ENCODE measurements at regions of chr9 and their contacts with region 1.

Region 1: DNA sequence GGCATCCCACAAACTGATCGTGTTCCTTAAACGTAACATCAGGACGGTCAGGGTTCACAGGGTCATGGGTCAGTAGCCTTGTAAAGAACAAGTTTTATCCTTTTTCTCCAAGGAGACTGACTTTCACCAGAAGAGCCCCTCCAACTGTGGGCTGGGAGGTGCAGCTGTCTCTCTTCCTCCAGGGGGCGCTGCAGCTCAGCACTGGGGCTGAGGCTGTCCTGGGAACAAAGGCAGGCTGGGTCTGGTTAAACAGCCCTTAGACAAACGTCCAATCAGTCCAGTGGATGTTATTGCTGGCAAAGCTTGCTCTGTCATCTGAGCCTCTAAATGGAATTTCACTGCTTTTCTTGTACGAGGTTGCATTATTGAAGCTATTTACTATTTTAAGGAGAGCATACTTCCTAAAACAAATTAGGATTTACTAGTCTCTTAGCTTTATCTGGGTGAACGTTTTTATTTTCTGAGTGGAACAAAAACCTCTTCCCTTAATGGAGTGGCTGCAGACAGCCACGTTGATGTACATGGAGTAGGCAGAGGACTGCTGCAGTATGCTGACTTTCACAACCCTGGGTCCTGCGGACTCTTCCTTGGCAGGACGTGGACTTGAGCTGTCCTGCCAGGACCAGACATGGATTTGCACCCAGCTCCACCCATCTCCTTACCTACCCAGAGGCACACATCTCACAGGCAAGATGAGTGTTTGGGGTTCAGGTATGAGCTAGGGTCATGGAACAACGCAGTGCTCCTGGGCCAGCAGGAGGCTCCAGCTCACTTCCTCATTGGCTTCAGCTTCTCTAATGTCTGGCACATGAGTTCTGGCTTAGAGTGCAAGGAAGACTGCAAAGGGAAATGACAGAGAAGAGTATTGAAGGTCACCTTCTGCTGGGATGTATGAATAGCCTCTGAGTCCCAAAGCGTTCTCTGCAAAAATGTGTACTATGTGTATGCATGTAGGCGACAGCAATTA is 7.8 kb downstream of the EXOSC2 start:
- DNase-seq: peak; percentile 81
- H3K4me3 ChIP-seq: no peak overlapping the region
- H3K27ac ChIP-seq: no peak overlapping the region
- H3K27me3 ChIP-seq: no peaks in the 10 kb centered on the region
- CTCF ChIP-seq: peak; percentile 99

Region 2: DNA sequence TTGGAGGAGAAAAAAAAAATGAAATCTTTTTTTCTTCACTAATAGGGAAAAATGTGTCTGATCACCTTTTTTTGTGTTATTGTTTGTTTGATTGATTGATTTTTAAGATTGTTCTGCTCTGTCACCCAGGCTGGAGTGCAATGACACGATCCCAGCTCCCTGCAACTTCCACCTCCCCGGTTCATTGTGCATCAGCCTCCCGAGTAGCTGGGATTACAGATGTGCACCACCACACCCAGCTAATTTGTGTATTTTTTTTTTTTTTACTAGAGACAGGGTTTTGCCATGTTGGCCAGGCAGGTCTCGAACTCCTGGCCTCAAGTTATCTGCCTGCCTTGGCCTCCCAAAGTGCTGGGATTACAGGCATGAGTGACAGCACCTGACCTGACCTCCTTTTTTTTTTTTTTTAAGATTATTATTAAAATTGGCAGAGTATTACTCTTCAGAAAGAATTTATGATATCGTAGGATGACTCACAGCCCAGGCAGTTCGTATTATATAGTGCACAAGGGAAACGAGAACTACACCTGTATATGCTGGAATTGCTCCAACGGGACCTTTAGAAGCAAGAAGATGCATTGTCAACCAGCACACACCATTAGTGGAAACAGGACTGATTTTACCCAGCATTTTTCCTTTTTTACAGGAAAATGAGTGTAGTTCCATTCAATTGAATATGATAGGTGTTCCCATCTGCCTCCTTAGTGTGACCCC is 94.3 kb before region 1 on chr9:
- CTCF ChIA-PET with region 1: no interaction called
- POLR2A ChIA-PET with region 1: no interaction called
- DNase-seq: no peak
- H3K4me3 ChIP-seq: no peak overlapping the region
- H3K27ac ChIP-seq: no peak overlapping the region
- H3K27me3 ChIP-seq: no peaks in the 10 kb centered on the region
- CTCF ChIP-seq: no peak

Region 3: GRCh38 chr9:130682490-130683121 is 18.7 kb before region 1 on chr9:
- CTCF ChIA-PET with region 1: interaction called, 16 read pairs
- POLR2A ChIA-PET with region 1: no interaction called
- DNase-seq: no peak
- H3K4me3 ChIP-seq: peak overlapping the region; percentile 36
- H3K27ac ChIP-seq: no peak overlapping the region
- H3K27me3 ChIP-seq: peaks cover 19% of the 10 kb centered on the region
- CTCF ChIP-seq: peak; percentile 86

Region 4: DNA sequence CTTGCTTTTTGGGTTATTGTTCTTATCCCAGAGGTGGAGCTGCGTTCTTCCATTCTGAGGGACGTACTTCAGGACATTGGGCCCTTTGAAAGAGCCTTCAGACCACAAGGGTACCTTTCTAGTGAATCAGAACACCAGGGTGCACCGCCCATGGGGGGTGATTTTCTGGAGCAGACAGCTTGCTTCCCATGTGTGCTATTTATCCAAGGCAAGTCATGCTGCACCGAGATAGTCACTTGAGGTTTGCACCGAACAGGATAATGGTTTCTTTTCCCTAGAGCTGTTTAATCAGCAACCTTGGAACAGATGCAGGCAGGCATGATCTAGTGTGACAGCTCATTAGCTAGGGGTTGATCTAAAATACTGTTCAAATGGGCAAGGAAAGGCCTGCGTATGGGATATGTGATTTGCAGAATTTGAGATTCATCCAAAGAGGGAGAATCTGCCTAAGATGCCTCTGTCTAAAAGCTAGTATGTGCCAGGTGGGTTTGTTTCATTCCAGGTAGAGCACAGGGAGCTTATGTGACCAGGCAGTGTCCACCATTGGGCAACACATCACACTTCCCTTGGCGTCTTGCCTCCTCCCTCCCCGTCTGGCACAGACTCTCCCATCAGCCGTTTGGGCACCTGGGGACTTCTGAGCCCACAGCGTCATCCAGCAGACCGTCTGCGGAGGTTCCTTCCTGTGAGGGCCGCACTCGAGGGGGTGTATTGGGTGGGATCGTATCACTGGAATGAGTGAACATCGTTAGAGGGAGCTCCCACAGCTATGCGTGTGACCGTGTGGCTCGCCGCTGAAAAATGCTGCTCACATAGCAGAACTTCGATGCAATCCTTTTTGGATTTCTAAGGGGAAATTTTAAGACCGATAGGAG is 156.8 kb after region 1 on chr9:
- CTCF ChIA-PET with region 1: interaction called, 390 read pairs
- POLR2A ChIA-PET with region 1: no interaction called
- DNase-seq: peak; percentile 82
- H3K4me3 ChIP-seq: 0 out of 2 replicates have a peak overlapping the region, but pooled peaks have one; percentile 7
- H3K27ac ChIP-seq: peak overlapping the region; percentile 94
- H3K27me3 ChIP-seq: no peaks in the 10 kb centered on the region
- CTCF ChIP-seq: no peak

Region 5: GRCh38 chr9:130932255-130933079 is 231.1 kb after region 1 on chr9:
- CTCF ChIA-PET with region 1: interaction called, 14 read pairs
- POLR2A ChIA-PET with region 1: no interaction called
- DNase-seq: no peak
- H3K4me3 ChIP-seq: peak overlapping the region; percentile 29
- H3K27ac ChIP-seq: peak overlapping the region; percentile 87
- H3K27me3 ChIP-seq: no peaks in the 10 kb centered on the region
- CTCF ChIP-seq: peak; percentile 28

Region 6: DNA sequence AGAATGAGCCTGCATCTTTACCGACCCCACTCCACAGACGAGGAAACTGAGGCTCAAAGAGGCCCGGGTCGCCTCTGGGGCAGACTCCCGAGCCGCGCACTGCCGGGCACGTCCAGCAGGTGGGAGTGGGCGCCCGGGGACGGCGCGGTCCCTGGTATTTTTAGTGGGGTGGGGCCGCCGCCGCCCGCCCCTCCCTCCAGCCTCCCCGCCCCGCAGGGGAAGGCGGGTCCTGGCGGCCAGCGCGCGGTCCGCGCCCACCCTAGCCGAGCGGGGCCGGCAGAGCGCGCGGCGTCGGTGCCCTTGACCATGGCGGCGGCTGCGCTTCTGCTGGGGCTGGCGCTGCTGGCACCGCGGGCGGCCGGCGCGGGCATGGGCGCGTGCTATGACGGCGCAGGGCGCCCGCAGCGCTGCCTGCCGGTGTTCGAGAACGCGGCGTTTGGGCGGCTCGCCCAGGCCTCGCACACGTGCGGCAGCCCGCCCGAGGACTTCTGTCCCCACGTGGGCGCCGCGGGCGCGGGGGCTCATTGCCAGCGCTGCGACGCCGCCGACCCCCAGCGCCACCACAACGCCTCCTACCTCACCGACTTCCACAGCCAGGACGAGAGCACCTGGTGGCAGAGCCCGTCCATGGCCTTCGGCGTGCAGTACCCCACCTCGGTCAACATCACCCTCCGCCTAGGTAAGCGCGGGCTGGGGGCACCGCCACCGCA is 307.7 kb after region 1 on chr9 and contains the start of gene LAMC3:
- CTCF ChIA-PET with region 1: interaction called, 12 read pairs
- POLR2A ChIA-PET with region 1: no interaction called
- DNase-seq: no peak
- H3K4me3 ChIP-seq: peak within 1 kb of the TSS; percentile 13
- H3K27ac ChIP-seq: no peak within 1 kb of the TSS
- H3K27me3 ChIP-seq: peaks cover 59% of the 10 kb centered on the region
- CTCF ChIP-seq: peak; percentile 32
- polyA plus RNA-seq, gene LAMC3: not detected in 2 replicates